Activated T-helper 2 cell treated with anti-CD3 and anti-CD28 coated beads, Interferon-gamma antibody, Interleukin-2, Interleukin-4, amounts not matched to agents 10 μg/mL and 5 μg/mL and 100 μg/mL, durations not matched to agents 14 hours and 24 hours and 36 hours (primary cell): ENCODE measurements at regions of chr5 and their contacts with region 1.

Region 1: DNA sequence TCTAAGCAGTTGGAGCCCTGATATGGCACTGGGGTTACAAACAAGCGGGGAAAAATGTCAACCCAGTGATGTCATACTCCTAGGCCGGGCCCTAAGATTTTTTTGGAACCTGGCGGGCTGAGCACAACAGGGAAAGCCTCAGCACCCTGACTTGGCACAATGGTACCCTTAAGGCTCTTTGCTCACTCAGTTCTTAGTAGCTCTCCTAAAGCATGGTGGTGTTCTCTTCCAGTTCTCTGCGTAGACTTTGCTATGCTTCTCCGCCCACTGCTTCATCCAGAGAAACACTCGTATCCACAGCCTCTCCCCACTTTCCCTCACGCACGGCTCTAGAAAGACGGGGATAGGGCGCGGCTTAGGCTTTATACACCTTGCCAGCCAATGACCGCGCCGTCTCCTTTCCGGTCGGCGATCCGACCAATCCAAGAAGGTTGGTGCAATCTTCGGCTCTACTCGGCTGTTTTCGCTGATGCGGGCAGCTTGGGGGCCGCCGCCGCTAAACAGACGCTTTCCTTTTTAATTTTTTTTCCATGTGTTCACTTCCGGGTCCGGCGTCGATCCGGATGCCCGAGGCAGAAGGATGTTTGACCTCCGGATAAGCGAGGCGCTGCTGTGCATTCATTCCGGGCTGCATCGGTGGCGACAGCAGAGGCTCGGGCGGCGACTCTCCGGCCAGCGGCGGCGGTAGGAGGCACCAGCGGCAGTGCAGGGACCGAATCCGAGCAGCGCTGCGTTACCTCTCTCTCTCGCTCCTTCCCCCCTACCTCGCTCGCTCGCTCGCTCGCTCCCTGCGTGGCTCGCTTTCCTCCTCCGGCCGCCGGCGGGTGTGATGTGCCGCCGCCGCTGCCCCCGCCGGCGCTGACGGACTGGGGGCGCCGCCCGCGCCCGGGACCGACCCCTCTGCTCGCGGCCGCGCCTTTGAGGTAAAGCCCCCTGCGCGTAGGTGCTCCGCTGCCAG is at the start of gene CSNK1G3:
- DNase-seq: peak; percentile 92
- H3K4me3 Mint-ChIP-seq: peak within 1 kb of the TSS; percentile 95
- H3K27ac Mint-ChIP-seq: peak within 1 kb of the TSS; percentile 96
- H3K4me1 Mint-ChIP-seq: peaks cover 39% of the 10 kb centered on the region
- H3K27me3 Mint-ChIP-seq: peaks cover 5% of the 10 kb centered on the region
- total RNA-seq, gene CSNK1G3: 37.7 and 38.2 TPM in 2 replicates

Region 2: GRCh38 chr5:123438902-123439301 is 73.0 kb before region 1 on chr5:
- intact Hi-C with region 1: loop called (anchors 1 kb)
- DNase-seq: peak; percentile 29
- H3K4me3 Mint-ChIP-seq: no peak overlapping the region
- H3K27ac Mint-ChIP-seq: peak overlapping the region; percentile 81
- H3K4me1 Mint-ChIP-seq: peaks cover 33% of the 10 kb centered on the region
- H3K27me3 Mint-ChIP-seq: no peaks in the 10 kb centered on the region

Region 3: DNA sequence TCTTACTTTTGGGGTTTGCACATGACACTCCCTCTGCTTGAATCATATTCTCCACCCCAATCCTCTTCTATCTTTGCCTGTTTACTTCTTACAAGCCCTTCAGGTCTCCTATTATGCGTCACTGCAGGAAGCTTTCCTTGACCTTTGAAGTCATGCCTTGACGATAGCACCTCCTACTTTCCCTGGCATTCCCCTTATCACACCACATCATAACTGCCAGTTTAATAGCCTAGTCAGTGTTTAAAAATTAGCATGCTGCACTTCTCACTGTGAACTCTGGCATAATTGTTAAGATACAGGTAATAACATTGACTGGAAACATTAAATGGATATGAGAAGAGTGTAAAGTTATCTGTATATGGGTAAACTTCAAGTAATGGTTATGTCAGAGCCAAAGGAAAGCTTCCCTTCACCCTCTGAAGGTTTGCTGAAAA is 51.6 kb before region 1 on chr5:
- intact Hi-C with region 1: loop called (anchors 1 kb)
- DNase-seq: no peak
- H3K4me3 Mint-ChIP-seq: no peak overlapping the region
- H3K27ac Mint-ChIP-seq: peak overlapping the region; percentile 89
- H3K4me1 Mint-ChIP-seq: peaks cover 14% of the 10 kb centered on the region
- H3K27me3 Mint-ChIP-seq: peaks cover 2% of the 10 kb centered on the region

Region 4: GRCh38 chr5:123545506-123545905 is 33.6 kb after region 1 on chr5:
- intact Hi-C with region 1: loop called (anchors 1 kb)
- DNase-seq: no peak
- H3K4me3 Mint-ChIP-seq: no peak overlapping the region
- H3K27ac Mint-ChIP-seq: no peak overlapping the region
- H3K4me1 Mint-ChIP-seq: peaks cover 36% of the 10 kb centered on the region
- H3K27me3 Mint-ChIP-seq: no peaks in the 10 kb centered on the region